HCT116 (cell line): ENCODE measurements at regions of chr12 and their contacts with region 1.

Region 1: GRCh38 chr12:71780237-71780822 is 25.7 kb downstream of the RAB21 start:
- DNase-seq: peak; percentile 16
- ATAC-seq: peak; percentile 71
- H3K4me3 ChIP-seq: no peak overlapping the region
- H3K27ac ChIP-seq: no peak overlapping the region
- H3K4me1 ChIP-seq: no peaks in the 10 kb centered on the region
- H3K27me3 ChIP-seq: no peaks in the 10 kb centered on the region
- CTCF ChIP-seq: peak; percentile 57 to 87 (median 75); a peak in 5 of 6 replicates
- POLR2A ChIP-seq: no peak
- RAD21 ChIP-seq: peak; percentile 69

Region 2: GRCh38 chr12:71791473-71792150 is 11.3 kb after region 1 on chr12:
- CTCF ChIA-PET with region 1: interaction called, 10 read pairs
- POLR2A ChIA-PET with region 1: no interaction called
- RAD21 ChIA-PET with region 1: no interaction called
- intact Hi-C with region 1: no loop called
- DNase-seq: no peak
- ATAC-seq: no peak
- H3K4me3 ChIP-seq: no peak overlapping the region
- H3K27ac ChIP-seq: no peak overlapping the region
- H3K4me1 ChIP-seq: no peaks in the 10 kb centered on the region
- H3K27me3 ChIP-seq: no peaks in the 10 kb centered on the region
- CTCF ChIP-seq: no peak
- POLR2A ChIP-seq: no peak
- RAD21 ChIP-seq: no peak

Region 3: DNA sequence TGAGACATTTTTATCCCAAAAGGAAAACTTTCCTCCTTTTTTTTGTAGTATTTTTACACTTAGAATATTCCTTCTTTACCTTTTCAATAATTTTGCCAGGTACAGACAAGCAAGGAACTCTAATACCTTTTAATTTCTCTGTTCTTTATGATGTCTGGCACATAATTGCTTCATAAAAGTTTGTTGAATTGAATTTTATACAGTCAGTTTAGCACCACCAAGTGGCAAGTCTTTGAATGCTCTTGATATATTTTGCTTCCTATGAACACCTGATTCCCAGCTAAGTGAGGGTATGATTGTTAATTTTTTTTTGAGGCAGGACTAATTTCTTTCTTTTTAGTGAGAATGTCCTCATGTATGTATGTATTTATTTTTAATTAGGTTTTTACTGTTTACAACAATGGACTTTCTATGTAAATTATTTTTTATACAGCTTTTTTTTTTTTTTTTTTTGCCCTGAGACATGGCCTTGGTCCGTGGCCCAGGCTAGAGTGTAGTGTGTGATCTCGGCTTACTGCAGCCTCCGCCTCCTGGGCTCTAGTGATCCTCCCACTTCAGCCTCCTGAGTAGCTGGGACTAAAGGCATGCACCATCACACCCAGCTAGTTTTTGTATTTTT is 66.1 kb after region 1 on chr12:
- CTCF ChIA-PET with region 1: interaction called, 15 read pairs
- POLR2A ChIA-PET with region 1: no interaction called
- RAD21 ChIA-PET with region 1: no interaction called
- intact Hi-C with region 1: loop called (anchors 2 kb)
- DNase-seq: peak; percentile 13
- ATAC-seq: peak; percentile 54; the same call in 1 of the 2 replicates
- H3K4me3 ChIP-seq: no peak overlapping the region
- H3K27ac ChIP-seq: no peak overlapping the region
- H3K4me1 ChIP-seq: no peaks in the 10 kb centered on the region
- H3K27me3 ChIP-seq: no peaks in the 10 kb centered on the region
- CTCF ChIP-seq: peak; percentile 32 to 70 (median 53); a peak in 5 of 6 replicates
- POLR2A ChIP-seq: no peak
- RAD21 ChIP-seq: peak; percentile 53; the same call in 1 of the 2 replicates

Region 4: DNA sequence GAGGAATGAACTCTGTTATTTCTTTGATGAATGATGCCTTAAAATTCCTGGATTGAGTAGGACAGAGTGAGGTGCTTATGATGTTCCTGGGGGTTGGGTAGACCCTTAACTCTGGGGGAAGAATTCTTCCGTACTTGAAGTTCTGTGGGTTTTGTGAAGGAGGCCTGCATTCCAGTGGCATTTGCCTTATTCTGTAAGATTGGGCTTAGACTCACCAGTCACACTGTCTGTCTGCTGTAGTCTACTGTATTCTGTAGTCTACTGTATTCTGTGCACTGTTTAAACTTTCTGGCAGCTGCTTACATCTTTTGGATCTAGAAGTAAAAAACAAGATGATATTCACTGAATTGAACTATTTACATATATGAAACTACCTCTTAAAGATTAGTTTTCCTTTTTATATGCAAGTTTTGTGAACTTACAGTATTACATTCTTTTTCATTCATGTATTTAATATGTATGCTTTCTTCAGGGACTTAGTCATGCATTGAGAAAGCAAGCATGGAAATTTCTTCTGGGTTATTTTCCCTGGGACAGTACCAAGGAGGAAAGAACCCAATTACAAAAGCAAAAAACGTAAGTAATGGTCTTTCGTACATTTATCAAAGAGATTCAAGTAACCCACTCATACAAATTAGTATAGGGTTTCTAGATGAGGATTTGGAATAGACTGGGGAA is 116.0 kb after region 1 on chr12:
- CTCF ChIA-PET with region 1: no interaction called
- POLR2A ChIA-PET with region 1: no interaction called
- RAD21 ChIA-PET with region 1: no interaction called
- intact Hi-C with region 1: loop called (anchors 5 kb)
- DNase-seq: no peak
- ATAC-seq: no peak
- H3K4me3 ChIP-seq: no peak overlapping the region
- H3K27ac ChIP-seq: no peak overlapping the region
- H3K4me1 ChIP-seq: no peaks in the 10 kb centered on the region
- H3K27me3 ChIP-seq: no peaks in the 10 kb centered on the region
- CTCF ChIP-seq: no peak
- POLR2A ChIP-seq: no peak
- RAD21 ChIP-seq: no peak